ENCODE measurements at regions of chr18 and their contacts with region 1.

Region 1: DNA sequence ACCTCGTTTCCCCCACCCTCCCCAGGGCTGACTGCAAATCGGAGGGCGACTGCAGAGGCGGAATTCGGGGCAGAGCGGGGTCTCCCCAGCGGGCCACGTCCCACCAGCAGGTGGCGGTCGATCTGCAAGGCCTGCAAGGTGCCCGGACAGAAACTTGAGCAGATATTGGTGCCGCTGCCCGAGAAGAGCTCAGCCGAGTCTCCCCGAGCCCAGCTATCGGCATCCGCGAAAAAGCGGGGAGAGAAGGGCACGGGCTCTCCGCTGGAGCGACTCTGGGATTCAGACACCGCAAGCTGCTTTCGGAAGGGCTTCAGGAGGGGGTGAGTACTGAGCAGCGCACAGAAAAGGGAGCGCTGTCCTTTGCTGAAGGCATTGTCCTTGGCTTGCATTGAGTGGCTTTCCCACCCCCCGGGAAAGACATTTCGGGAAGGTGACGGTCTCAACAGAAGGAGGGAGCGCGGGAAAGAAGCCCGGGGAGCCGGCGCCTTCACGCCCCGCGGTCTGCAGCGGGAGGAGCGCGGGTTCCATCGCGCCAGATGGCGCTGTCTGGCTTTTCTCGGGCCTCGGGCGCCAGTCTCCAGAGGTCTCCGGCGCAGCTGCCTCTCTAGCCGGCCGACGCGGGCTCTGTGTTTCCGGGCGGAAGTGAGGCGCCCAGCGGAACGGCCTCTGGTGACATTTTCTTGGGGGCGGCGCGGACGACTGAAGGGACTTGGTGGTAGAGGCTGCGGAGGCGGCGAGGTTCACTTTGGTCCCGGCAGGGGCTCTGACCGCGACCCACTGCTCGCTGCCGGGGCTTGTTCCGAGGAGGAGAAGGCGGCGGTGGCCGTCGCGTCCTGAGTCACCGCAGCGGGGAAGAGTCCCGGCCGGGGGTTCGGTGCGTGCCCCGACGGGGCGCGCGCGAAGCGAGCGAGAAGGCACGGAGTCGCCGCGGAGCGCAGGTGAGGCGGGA is 69.5 kb downstream of the HAUS1 start:
- DNase-seq: peak; percentile 97
- ATAC-seq: peak; percentile 85
- H3K4me3 Mint-ChIP-seq: peak overlapping the region; percentile 98
- H3K27ac Mint-ChIP-seq: peak overlapping the region; percentile 98
- H3K4me1 Mint-ChIP-seq: peaks cover 15% of the 10 kb centered on the region
- H3K27me3 Mint-ChIP-seq: no peaks in the 10 kb centered on the region
- CTCF ChIP-seq: peak; percentile 75

Region 2: GRCh38 chr18:45890606-45891005 is 283.1 kb before region 1 on chr18:
- CTCF ChIA-PET with region 1: no interaction called
- POLR2A ChIA-PET with region 1: no interaction called
- DNase-seq: no peak
- ATAC-seq: no peak
- H3K4me3 Mint-ChIP-seq: no peak overlapping the region
- H3K27ac Mint-ChIP-seq: no peak overlapping the region
- H3K4me1 Mint-ChIP-seq: no peaks in the 10 kb centered on the region
- H3K27me3 Mint-ChIP-seq: no peaks in the 10 kb centered on the region
- CTCF ChIP-seq: no peak

Region 3: GRCh38 chr18:46141199-46141598 is 32.5 kb before region 1 on chr18:
- CTCF ChIA-PET with region 1: interaction called, 16 read pairs
- POLR2A ChIA-PET with region 1: no interaction called
- DNase-seq: no peak
- ATAC-seq: no peak
- H3K4me3 Mint-ChIP-seq: no peak overlapping the region
- H3K27ac Mint-ChIP-seq: no peak overlapping the region
- H3K4me1 Mint-ChIP-seq: peaks cover 10% of the 10 kb centered on the region
- H3K27me3 Mint-ChIP-seq: no peaks in the 10 kb centered on the region
- CTCF ChIP-seq: no peak

Region 4: GRCh38 chr18:46158498-46158897 is 15.2 kb before region 1 on chr18:
- CTCF ChIA-PET with region 1: interaction called, 61 read pairs
- POLR2A ChIA-PET with region 1: no interaction called
- DNase-seq: no peak
- ATAC-seq: no peak; the same call in 1 of the 2 replicates
- H3K4me3 Mint-ChIP-seq: no peak overlapping the region
- H3K27ac Mint-ChIP-seq: no peak overlapping the region
- H3K4me1 Mint-ChIP-seq: peaks cover 14% of the 10 kb centered on the region
- H3K27me3 Mint-ChIP-seq: no peaks in the 10 kb centered on the region; the same call in 1 of the 2 replicates
- CTCF ChIP-seq: no peak

Region 5: GRCh38 chr18:46213295-46213694 is 39.6 kb after region 1 on chr18:
- CTCF ChIA-PET with region 1: interaction called, 56 read pairs
- POLR2A ChIA-PET with region 1: no interaction called
- DNase-seq: no peak
- ATAC-seq: no peak
- H3K4me3 Mint-ChIP-seq: no peak overlapping the region
- H3K27ac Mint-ChIP-seq: no peak overlapping the region
- H3K4me1 Mint-ChIP-seq: peaks cover 4% of the 10 kb centered on the region; the same call in 1 of the 2 replicates
- H3K27me3 Mint-ChIP-seq: no peaks in the 10 kb centered on the region
- CTCF ChIP-seq: 0 out of 2 replicates have a peak, but pooled peaks have one; percentile 32

Region 6: GRCh38 chr18:46239549-46239948 is 65.9 kb after region 1 on chr18:
- CTCF ChIA-PET with region 1: interaction called, 15 read pairs
- POLR2A ChIA-PET with region 1: no interaction called
- DNase-seq: no peak
- ATAC-seq: no peak
- H3K4me3 Mint-ChIP-seq: no peak overlapping the region
- H3K27ac Mint-ChIP-seq: no peak overlapping the region
- H3K4me1 Mint-ChIP-seq: peaks cover 42% of the 10 kb centered on the region
- H3K27me3 Mint-ChIP-seq: no peaks in the 10 kb centered on the region
- CTCF ChIP-seq: no peak

Measured in WTC11 (cell line).